H1 (cell line): ENCODE measurements at regions of chr11 and their contacts with region 1.

Region 1: DNA sequence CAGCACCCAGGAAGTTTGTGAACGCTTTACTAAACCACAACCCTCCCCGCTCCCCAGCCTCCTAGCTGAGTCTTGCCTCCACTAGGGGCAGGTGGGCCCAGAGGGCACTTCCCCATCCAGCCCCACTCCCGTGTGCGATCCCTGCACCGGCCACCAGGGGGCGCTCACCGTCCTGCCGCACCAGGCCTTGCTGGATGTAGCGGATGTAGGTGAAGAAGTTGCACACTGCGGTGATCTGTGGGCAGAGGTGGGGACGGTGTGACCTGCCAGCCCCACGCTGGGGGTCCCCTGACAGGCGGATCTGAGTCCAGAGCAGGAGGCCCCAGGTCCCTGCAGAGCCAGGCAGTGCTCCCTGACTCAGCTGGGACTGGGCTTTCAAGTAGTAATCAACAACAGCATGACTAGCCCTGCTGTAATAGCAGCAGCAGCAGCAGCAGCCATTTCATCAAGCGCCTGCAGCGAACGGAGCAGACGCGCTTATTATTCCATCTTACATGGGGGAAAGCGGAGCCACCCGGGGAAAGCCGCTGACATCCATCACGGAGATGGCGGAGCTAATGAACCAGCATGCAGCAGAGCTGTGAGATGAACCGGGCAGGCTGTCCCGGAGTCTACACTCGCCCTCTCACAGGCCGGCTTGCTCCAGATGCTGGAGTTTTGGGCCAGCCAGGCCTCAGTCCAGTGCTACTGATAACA is 7.9 kb upstream of the FADS3 start:
- DNase-seq: peak; percentile 78 to 100
- H3K4me3 ChIP-seq: no peak overlapping the region
- H3K27ac ChIP-seq: no peak overlapping the region
- H3K4me1 ChIP-seq: peaks cover 0 to 18% (median 4%) of the 10 kb centered on the region in 4 experiments; a peak in 6 of 7 replicates
- H3K27me3 ChIP-seq: no peaks in the 10 kb centered on the region
- CTCF ChIP-seq: peak in 2 of 3 experiments; percentile 99 to 100; a peak in 3 of 4 replicates
- EP300 ChIP-seq: no peak
- POLR2A ChIP-seq: no peak
- RAD21 ChIP-seq: peak; percentile 92 to 95

Region 2: DNA sequence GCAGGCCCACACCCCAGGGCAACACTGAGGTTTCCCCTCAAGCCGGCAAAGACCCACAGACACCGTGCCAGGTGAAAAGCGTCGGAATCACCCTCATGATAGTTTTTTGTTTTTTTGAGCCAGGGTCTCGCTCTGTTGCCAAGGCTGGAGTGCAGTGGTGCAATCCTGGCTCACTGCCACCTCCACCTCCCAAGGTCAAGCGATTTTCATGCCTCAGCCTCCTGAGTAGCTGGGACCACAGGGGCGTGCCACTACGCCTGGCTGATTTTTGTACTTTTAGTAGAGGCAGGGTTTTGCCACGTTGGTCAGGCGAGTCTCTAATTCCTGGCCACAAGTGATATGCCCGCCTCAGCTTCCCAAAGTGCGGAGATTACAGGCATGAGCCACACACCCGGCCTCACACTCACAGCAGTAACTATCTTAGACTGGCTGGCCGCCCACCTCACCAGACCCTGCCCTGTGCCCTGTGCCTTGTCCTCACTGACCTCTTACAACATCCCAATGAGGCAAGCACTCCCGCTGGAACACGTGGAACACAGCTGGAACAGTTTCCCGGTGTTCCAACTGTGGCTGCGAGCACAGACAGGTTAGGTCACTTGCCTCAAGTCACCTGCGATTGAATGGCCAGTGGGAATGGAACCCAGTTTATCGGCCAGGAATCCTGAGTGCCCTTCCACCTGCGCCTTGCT is 369.6 kb before region 1 on chr11:
- CTCF ChIA-PET with region 1: no interaction called
- POLR2A ChIA-PET with region 1: no interaction called
- DNase-seq: no peak
- H3K4me3 ChIP-seq: no peak overlapping the region
- H3K27ac ChIP-seq: no peak overlapping the region
- H3K4me1 ChIP-seq: peaks cover 0 to 11% (median 4%) of the 10 kb centered on the region in 4 experiments; a peak in 5 of 7 replicates
- H3K27me3 ChIP-seq: no peaks in the 10 kb centered on the region; a peak in 1 of 7 replicates
- CTCF ChIP-seq: no peak
- EP300 ChIP-seq: no peak
- POLR2A ChIP-seq: no peak
- RAD21 ChIP-seq: no peak

Region 3: GRCh38 chr11:61837411-61838005 is 61.8 kb before region 1 on chr11:
- CTCF ChIA-PET with region 1: no interaction called
- POLR2A ChIA-PET with region 1: no interaction called
- DNase-seq: no peak
- H3K4me3 ChIP-seq: no peak overlapping the region
- H3K27ac ChIP-seq: no peak overlapping the region
- H3K4me1 ChIP-seq: peaks cover 7 to 22% (median 15%) of the 10 kb centered on the region in 4 experiments
- H3K27me3 ChIP-seq: no peaks in the 10 kb centered on the region; a peak in 1 of 7 replicates
- CTCF ChIP-seq: no peak
- EP300 ChIP-seq: no peak
- POLR2A ChIP-seq: 0 out of 3 replicates have a peak, but pooled peaks of 1 of the 2 experiments have one; percentile 12
- RAD21 ChIP-seq: no peak

Region 4: DNA sequence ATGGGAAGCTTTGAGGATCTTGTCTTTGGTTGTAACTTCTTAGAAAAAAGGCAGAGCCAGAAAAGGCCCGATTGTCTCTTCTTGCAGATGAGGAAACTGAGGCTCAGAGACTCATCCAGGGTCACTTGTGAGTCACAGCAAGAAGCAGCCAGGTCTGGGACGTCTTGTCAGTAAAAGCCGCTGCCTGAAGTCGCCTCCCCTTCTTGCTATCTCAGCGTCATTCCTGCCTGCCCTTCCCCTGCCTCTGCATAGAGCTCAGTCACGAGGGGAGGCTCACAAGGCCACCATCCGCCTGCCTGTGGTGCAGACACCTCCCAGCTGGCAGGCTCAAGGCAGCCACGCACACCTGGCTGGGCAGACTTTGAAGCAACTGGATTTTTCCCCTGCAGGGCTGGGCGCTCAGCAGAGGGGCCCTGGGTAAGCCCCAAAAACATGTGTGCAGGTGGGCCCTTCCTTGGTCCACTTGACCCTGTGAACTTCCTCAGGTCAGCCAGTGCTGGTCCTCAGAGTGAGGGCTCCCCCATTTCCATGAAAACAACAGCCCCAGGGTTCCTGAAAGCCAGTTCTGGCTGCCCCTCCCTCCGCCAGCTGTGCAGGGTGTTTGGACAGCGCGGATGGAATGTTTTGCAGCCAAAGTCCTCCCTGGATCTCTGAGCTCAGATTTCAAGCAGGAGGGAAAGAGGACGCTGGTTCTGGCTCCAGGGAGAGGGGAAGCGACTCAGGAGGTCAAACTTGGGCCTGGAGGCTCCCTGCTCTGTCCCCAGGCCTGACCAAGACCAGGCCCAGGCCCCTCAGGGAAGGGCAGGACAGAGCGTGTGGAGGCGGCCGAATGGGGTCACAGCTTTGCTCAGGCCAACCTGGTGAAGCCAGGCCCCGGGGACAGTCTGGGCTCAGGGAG is 24.1 kb after region 1 on chr11:
- CTCF ChIA-PET with region 1: interaction called, 225 read pairs
- POLR2A ChIA-PET with region 1: interaction called, 9 read pairs
- DNase-seq: peak in 1 of 2 experiments; percentile 62
- H3K4me3 ChIP-seq: no peak overlapping the region
- H3K27ac ChIP-seq: peak overlapping the region; percentile 52; the same call in 1 of the 2 replicates
- H3K4me1 ChIP-seq: peaks cover 6 to 18% (median 16%) of the 10 kb centered on the region in 4 experiments
- H3K27me3 ChIP-seq: peaks cover 0 to 9% (median 5%) of the 10 kb centered on the region in 4 experiments; a peak in 5 of 7 replicates
- CTCF ChIP-seq: no peak
- EP300 ChIP-seq: no peak
- POLR2A ChIP-seq: 0 out of 3 replicates have a peak, but pooled peaks of 1 of the 2 experiments have one; percentile 22
- RAD21 ChIP-seq: no peak

Region 5: GRCh38 chr11:61947486-61948210 is 48.4 kb after region 1 on chr11:
- CTCF ChIA-PET with region 1: interaction called, 658 read pairs
- POLR2A ChIA-PET with region 1: interaction called, 137 read pairs
- DNase-seq: peak; percentile 60 to 86
- H3K4me3 ChIP-seq: no peak overlapping the region
- H3K27ac ChIP-seq: no peak overlapping the region
- H3K4me1 ChIP-seq: no peaks in the 10 kb centered on the region; a peak in 1 of 7 replicates
- H3K27me3 ChIP-seq: no peaks in the 10 kb centered on the region
- CTCF ChIP-seq: peak; percentile 89 to 99 (median 98)
- EP300 ChIP-seq: no peak
- POLR2A ChIP-seq: no peak
- RAD21 ChIP-seq: peak; percentile 100

Region 6: DNA sequence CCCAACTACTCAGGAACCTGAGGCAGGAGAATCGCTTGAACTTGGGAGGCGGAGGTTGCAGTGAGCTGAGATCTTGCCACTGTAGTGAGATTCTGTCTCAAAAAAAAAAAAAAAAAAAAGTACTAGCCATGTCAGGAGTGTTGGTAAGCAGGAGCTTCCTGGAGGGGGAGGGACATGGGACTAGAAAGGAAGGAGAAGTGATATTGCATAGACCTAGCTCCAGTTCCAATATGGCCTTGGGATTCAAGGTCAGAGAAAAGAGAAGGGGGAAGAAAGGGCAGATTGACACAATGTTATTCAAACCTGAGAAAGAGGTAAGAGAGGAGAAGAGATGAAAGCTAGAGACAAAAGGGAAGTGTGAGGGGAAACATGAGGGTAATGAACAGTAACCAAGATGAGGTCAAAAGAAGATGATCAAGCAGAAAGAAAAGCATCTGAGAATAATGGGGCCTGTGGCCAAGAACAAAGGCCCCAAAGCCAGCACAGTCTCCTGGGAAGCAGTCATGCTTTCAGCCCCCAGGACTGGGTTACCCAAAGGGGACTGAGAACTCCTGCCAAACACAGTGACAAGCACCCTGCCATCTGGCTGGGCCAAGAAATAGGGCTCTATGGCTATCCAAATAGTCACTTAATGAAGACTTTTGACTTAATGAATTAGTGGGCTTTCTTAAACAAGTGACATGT is 119.8 kb after region 1 on chr11:
- CTCF ChIA-PET with region 1: interaction called, 11 read pairs
- POLR2A ChIA-PET with region 1: no interaction called
- DNase-seq: no peak
- H3K4me3 ChIP-seq: no peak overlapping the region
- H3K27ac ChIP-seq: no peak overlapping the region
- H3K4me1 ChIP-seq: no peaks in the 10 kb centered on the region
- H3K27me3 ChIP-seq: no peaks in the 10 kb centered on the region
- CTCF ChIP-seq: no peak
- EP300 ChIP-seq: no peak
- POLR2A ChIP-seq: no peak
- RAD21 ChIP-seq: no peak

Region 7: DNA sequence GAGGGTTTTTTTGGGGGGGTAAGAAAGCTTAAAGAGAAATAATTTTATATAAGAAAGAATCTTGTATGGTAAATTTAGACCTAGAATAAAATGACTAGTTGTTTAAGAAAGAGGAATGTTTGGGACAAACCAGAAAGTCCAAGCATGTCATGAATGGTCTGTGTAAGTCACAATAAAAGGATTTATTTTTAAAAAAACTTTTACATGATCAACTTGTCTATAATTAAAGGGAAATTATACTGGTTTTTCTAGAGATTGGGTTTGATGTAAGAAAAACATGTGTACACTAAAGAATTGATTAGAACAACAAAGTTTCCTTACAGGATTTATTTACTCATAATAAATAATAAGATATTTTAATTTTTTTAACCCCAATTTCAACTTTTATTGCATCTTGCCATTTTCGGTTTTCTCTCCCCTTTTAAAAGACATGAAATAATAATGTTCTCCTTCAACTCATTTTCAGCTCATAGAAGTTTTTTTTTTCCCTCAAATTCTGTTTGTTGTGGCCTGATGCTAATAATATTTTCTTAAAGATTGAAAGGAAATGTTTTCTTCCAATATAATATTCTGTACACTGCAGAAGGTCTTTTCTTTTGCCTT is 189.1 kb after region 1 on chr11:
- CTCF ChIA-PET with region 1: interaction called, 198 read pairs
- POLR2A ChIA-PET with region 1: no interaction called
- DNase-seq: no peak
- H3K4me3 ChIP-seq: no peak overlapping the region
- H3K27ac ChIP-seq: no peak overlapping the region
- H3K4me1 ChIP-seq: no peaks in the 10 kb centered on the region
- H3K27me3 ChIP-seq: no peaks in the 10 kb centered on the region
- CTCF ChIP-seq: no peak
- EP300 ChIP-seq: no peak
- POLR2A ChIP-seq: no peak
- RAD21 ChIP-seq: no peak